ENCODE measurements at regions of chr1 and their contacts with region 1.

Region 1: DNA sequence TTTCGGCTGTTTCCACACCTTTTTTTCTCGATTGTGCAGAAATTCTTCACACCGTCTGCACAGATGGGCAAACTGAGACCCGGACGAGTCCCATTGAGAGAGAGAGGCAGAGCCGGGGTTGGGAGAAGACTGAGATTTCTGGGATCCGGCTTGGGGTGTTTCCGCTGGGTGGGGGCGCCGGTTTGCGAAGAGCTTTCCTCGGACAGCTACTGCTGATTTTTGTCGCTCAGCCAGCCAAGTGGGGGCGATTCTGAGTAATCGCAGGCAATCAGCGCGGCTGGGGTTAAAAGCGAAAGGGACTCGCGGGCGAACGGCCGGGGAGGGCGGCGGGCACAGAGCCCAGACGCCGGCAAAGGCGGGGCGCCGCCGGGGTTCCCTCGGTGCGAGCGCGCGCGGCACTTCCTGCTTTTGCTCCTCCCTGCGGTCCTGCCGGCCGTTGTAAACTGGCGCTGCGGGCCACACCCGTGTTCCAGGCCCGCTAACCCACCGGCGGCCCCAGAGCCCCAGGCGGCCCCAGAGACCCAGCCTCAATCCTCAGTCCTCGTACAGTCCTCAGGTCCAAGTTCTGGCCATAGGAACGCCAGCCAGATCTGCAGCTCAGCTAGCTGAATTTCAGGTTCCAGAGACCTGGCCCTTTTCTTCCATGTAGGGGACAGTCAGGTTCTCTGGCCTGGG is 32.4 kb upstream of the JUN start:
- DNase-seq: peak; percentile 69 to 91 (median 82)
- ATAC-seq: peak; percentile 69
- H3K4me3 ChIP-seq: peak overlapping the region; percentile 82
- H3K4me3 Mint-ChIP-seq: peak overlapping the region; percentile 90
- H3K27ac ChIP-seq: peak overlapping the region; percentile 61 to 71
- H3K27ac Mint-ChIP-seq: peak overlapping the region; percentile 79
- H3K4me1 ChIP-seq: peaks cover 47% of the 10 kb centered on the region
- H3K4me1 Mint-ChIP-seq: peaks cover 51% of the 10 kb centered on the region
- H3K27me3 ChIP-seq: no peaks in the 10 kb centered on the region
- H3K27me3 Mint-ChIP-seq: no peaks in the 10 kb centered on the region
- CTCF ChIP-seq: no peak

Region 2: DNA sequence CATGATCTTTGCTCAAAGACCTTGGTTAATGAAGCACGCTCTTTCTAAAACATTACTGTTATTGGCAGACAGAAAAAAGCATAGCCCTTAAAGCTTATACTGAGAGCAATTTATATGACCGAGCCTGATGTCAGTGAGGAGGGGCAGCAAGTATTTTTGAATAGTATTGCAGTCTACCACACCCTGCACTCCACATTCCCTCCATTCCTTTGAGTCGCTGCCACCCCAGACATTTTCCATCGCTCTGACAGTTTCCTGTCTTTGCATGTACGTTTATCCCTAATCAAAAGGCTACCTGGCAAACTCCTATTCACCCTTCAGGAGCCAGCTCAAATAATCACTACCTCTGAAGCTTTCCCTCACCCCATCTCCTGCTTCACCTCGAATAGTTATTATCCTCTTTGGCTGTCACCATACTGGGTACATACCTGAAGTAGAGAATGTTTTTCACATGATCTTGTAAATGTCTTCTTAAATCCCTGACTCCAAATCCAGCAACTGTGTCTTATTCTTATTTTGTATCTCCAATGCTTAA is 26.8 kb before region 1 on chr1:
- CTCF ChIA-PET with region 1: interaction called, 4 read pairs
- POLR2A ChIA-PET with region 1: interaction called, 41 read pairs
- intact Hi-C with region 1: loop called (anchors 1 to 2 kb)
- DNase-seq: no peak
- ATAC-seq: no peak
- H3K4me3 ChIP-seq: no peak overlapping the region
- H3K4me3 Mint-ChIP-seq: no peak overlapping the region
- H3K27ac ChIP-seq: no peak overlapping the region
- H3K27ac Mint-ChIP-seq: no peak overlapping the region
- H3K4me1 ChIP-seq: peaks cover 16% of the 10 kb centered on the region
- H3K4me1 Mint-ChIP-seq: peaks cover 63% of the 10 kb centered on the region
- H3K27me3 ChIP-seq: no peaks in the 10 kb centered on the region
- H3K27me3 Mint-ChIP-seq: no peaks in the 10 kb centered on the region
- CTCF ChIP-seq: no peak

Region 3: GRCh38 chr1:58903514-58904298 is 87.5 kb after region 1 on chr1:
- CTCF ChIA-PET with region 1: no interaction called
- POLR2A ChIA-PET with region 1: interaction called, 3 read pairs
- intact Hi-C with region 1: loop called in 1 of 2 experiments (anchors 10 kb)
- DNase-seq: peak; percentile 44 to 86 (median 65)
- ATAC-seq: peak; percentile 83
- H3K4me3 ChIP-seq: peak overlapping the region; percentile 51
- H3K4me3 Mint-ChIP-seq: peak overlapping the region; percentile 77
- H3K27ac ChIP-seq: no peak overlapping the region
- H3K27ac Mint-ChIP-seq: peak overlapping the region; percentile 73
- H3K4me1 ChIP-seq: peaks cover 14% of the 10 kb centered on the region
- H3K4me1 Mint-ChIP-seq: peaks cover 9% of the 10 kb centered on the region
- H3K27me3 ChIP-seq: no peaks in the 10 kb centered on the region
- H3K27me3 Mint-ChIP-seq: no peaks in the 10 kb centered on the region
- CTCF ChIP-seq: no peak

Region 4: GRCh38 chr1:58982259-58982998 is 166.2 kb after region 1 on chr1:
- CTCF ChIA-PET with region 1: no interaction called
- POLR2A ChIA-PET with region 1: no interaction called
- intact Hi-C with region 1: no loop called
- DNase-seq: no peak
- ATAC-seq: no peak
- H3K4me3 ChIP-seq: no peak overlapping the region
- H3K4me3 Mint-ChIP-seq: no peak overlapping the region
- H3K27ac ChIP-seq: no peak overlapping the region
- H3K27ac Mint-ChIP-seq: no peak overlapping the region
- H3K4me1 ChIP-seq: peaks cover 13% of the 10 kb centered on the region
- H3K4me1 Mint-ChIP-seq: peaks cover 20% of the 10 kb centered on the region
- H3K27me3 ChIP-seq: no peaks in the 10 kb centered on the region
- H3K27me3 Mint-ChIP-seq: no peaks in the 10 kb centered on the region
- CTCF ChIP-seq: no peak

Region 5: DNA sequence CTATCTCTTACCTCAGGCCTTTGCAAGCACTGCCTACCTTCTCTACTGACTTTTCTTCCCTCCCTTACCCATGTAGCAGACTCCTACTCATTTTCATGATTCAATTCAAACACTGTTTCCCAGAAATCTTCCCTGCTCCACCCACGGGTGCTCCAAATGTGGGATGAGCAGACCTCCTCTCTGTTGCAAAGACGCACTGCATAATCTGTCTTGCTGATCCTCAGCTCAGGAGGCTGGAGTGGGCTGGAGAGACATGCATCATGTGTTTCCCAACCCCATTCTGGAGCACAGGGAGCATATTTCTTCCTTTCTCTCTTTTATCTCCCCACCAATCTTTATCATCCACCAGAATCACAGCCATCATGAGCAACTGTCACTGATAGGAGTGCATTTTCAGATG is 1806.3 kb after region 1 on chr1:
- CTCF ChIA-PET with region 1: no interaction called
- POLR2A ChIA-PET with region 1: no interaction called
- intact Hi-C with region 1: no loop called
- DNase-seq: no peak
- ATAC-seq: no peak
- H3K4me3 ChIP-seq: no peak overlapping the region
- H3K4me3 Mint-ChIP-seq: no peak overlapping the region
- H3K27ac ChIP-seq: no peak overlapping the region
- H3K27ac Mint-ChIP-seq: no peak overlapping the region
- H3K4me1 ChIP-seq: no peaks in the 10 kb centered on the region
- H3K4me1 Mint-ChIP-seq: no peaks in the 10 kb centered on the region
- H3K27me3 ChIP-seq: peaks cover 0 to 3% of the 10 kb centered on the region in 2 experiments
- H3K27me3 Mint-ChIP-seq: peaks cover 20% of the 10 kb centered on the region
- CTCF ChIP-seq: no peak